ENCODE measurements at regions of chr5 and their contacts with region 1.

Region 1: GRCh38 chr5:36079200-36079761 is 12.6 kb upstream of the UGT3A2 start:
- DNase-seq: no peak
- H3K4me3 ChIP-seq: no peak overlapping the region
- CTCF ChIP-seq: peak; percentile 58

Region 2: DNA sequence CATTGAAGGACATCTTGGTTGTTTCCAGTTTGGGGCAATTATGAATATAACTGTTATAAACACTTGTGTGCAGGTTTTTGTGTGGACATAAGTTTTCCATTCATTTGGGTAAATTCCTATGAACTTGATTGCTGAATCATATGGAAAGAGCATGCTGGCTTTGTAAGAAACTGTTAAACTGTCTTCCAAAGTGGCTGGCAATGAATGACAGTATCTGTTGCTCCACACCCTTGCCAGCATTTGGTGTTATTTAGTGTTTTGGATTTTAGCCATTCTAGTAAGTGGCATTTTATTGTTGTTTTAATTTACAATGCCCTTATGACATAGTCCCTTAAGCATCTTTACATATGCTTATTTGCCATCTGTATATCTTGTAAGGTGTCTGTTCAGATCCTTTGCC is 17.2 kb after region 1 on chr5:
- CTCF ChIA-PET with region 1: interaction called, 15 read pairs
- POLR2A ChIA-PET with region 1: no interaction called
- DNase-seq: no peak
- H3K4me3 ChIP-seq: no peak overlapping the region
- CTCF ChIP-seq: no peak

Region 3: GRCh38 chr5:36151434-36152323 is 72.4 kb after region 1 on chr5 and contains the starts of genes LMBRD2 and SKP2:
- CTCF ChIA-PET with region 1: interaction called, 17 read pairs
- POLR2A ChIA-PET with region 1: no interaction called
- DNase-seq: peak; percentile 86
- H3K4me3 ChIP-seq: peak within 1 kb of the TSS; percentile 90
- CTCF ChIP-seq: no peak

Region 4: GRCh38 chr5:36241631-36242533 is 162.6 kb after region 1 on chr5 and contains the start of gene NADK2:
- CTCF ChIA-PET with region 1: interaction called, 14 read pairs
- POLR2A ChIA-PET with region 1: no interaction called
- DNase-seq: peak; percentile 71
- H3K4me3 ChIP-seq: peak within 1 kb of the TSS; percentile 78
- CTCF ChIP-seq: peak; percentile 68

Region 5: GRCh38 chr5:36397901-36398536 is 318.7 kb after region 1 on chr5:
- CTCF ChIA-PET with region 1: interaction called, 15 read pairs
- POLR2A ChIA-PET with region 1: no interaction called
- DNase-seq: no peak
- H3K4me3 ChIP-seq: no peak overlapping the region
- CTCF ChIP-seq: peak; percentile 40

Region 6: GRCh38 chr5:36552626-36553393 is 473.5 kb after region 1 on chr5:
- CTCF ChIA-PET with region 1: no interaction called
- POLR2A ChIA-PET with region 1: no interaction called
- DNase-seq: no peak
- H3K4me3 ChIP-seq: no peak overlapping the region
- CTCF ChIP-seq: no peak

Measured in AG04449 (cell line).